SK-N-SH (cell line): ENCODE measurements at regions of chr9 and their contacts with region 1.

Region 1: GRCh38 chr9:114082017-114082762 is 4.1 kb upstream of the AMBP start:
- DNase-seq: peak; percentile 86
- H3K4me3 ChIP-seq: no peak overlapping the region; a peak in 1 of 4 replicates
- H3K27ac ChIP-seq: no peak overlapping the region
- H3K4me1 ChIP-seq: no peaks in the 10 kb centered on the region; a peak in 1 of 4 replicates
- H3K27me3 ChIP-seq: no peaks in the 10 kb centered on the region; the same call in 1 of the 2 replicates
- CTCF ChIP-seq: peak; percentile 89
- EP300 ChIP-seq: no peak
- RAD21 ChIP-seq: peak; percentile 92

Region 2: DNA sequence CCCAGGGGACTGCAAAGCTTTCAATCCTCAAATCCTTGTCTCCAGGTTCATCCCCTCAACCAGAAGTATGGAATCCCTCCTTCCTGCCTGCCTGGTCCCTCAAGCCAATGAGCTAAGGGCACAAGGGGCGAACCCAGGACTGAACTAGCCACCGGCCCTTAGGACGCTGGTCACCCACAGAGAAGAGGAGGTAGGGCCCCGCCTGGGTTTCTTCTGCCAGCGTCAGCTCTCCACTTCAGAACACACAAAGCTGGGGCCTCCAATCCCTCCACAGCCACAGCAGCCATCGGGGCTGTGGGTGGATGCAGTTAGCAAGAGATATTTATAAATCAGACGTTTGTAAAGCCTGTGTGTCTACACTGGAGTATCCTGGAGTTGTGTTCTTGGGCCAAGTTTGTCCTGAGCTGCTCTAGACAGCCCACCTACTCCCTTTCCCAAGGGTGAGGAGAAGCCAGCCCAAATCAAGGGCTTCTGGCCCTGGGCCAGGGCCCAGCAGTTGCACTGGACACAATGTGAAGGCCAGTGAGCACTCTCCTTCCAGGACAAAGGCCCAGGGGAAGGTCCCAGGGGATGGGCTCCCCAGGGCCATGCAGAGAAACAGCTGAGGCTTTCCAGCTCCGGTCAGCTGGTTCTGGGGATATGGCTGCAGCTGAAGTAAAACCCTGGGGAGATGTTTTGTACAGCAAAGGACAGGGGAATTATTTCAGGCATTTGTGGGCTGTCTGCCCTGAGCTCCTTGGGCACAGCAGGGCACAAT is 23.0 kb before region 1 on chr9:
- CTCF ChIA-PET with region 1: interaction called, 14 read pairs
- POLR2A ChIA-PET with region 1: no interaction called
- DNase-seq: no peak
- H3K4me3 ChIP-seq: no peak overlapping the region
- H3K27ac ChIP-seq: no peak overlapping the region
- H3K4me1 ChIP-seq: no peaks in the 10 kb centered on the region; a peak in 1 of 4 replicates
- H3K27me3 ChIP-seq: no peaks in the 10 kb centered on the region
- CTCF ChIP-seq: no peak
- EP300 ChIP-seq: no peak
- RAD21 ChIP-seq: no peak

Region 3: DNA sequence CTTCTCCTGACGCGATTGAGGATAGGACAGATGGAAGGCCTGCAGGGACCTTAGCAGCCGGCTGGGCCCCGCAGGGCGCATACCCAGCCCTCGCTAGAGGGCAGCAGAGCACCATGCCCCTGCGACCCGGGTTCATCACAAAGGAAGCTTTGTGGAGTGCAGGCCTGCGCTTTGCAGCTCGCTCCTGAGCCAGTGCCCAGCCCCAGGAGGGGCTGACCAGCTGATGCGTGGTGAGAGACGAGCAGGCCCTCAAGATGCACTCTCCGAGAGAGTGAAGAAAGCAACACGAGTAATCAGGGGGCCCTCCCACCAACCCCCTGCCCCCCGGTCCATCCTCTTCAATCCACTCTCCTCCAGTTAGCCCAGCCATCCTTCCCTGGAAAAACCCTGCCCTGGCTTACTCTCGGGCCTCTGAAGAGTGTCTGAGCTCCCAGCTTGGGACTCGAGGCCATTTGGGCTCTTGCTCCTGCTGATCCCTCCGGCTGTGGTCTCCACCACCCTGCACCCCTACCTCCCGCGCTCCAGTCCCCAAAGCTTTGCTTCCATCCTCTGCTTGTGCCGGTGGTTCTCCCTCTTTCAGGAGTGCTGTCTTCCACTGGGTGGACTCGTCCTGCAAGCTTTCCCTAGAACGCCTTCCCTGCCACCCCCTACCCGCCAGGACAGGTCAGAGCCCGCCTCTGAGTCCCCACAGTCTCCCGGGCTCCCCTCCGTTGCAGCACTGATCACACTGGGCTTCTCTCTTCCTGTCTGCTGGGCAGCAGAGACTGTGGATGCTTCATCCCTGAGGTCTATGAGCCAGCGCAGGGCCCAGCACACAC is 26.0 kb after region 1 on chr9:
- CTCF ChIA-PET with region 1: interaction called, 59 read pairs
- POLR2A ChIA-PET with region 1: no interaction called
- DNase-seq: peak; percentile 88
- H3K4me3 ChIP-seq: no peak overlapping the region; a peak in 1 of 4 replicates
- H3K27ac ChIP-seq: no peak overlapping the region
- H3K4me1 ChIP-seq: no peaks in the 10 kb centered on the region; a peak in 1 of 4 replicates
- H3K27me3 ChIP-seq: no peaks in the 10 kb centered on the region; the same call in 1 of the 2 replicates
- CTCF ChIP-seq: peak; percentile 82
- EP300 ChIP-seq: no peak
- RAD21 ChIP-seq: peak; percentile 92

Region 4: GRCh38 chr9:114155263-114155972 is 73.2 kb after region 1 on chr9 and contains the start of gene COL27A1:
- CTCF ChIA-PET with region 1: interaction called, 32 read pairs
- POLR2A ChIA-PET with region 1: no interaction called
- DNase-seq: peak; percentile 97
- H3K4me3 ChIP-seq: peak within 1 kb of the TSS; percentile 54 to 88
- H3K27ac ChIP-seq: peak within 1 kb of the TSS in 1 of 2 experiments; percentile 29; a peak in 1 of 4 replicates
- H3K4me1 ChIP-seq: peaks cover 5 to 8% of the 10 kb centered on the region in 2 experiments; a peak in 2 of 4 replicates
- H3K27me3 ChIP-seq: peaks cover 5% of the 10 kb centered on the region; the same call in 1 of the 2 replicates
- CTCF ChIP-seq: peak; percentile 93
- EP300 ChIP-seq: no peak
- RAD21 ChIP-seq: peak; percentile 82
- polyA plus RNA-seq, gene COL27A1: 6.8 and 8.7 TPM in 2 replicates

Region 5: DNA sequence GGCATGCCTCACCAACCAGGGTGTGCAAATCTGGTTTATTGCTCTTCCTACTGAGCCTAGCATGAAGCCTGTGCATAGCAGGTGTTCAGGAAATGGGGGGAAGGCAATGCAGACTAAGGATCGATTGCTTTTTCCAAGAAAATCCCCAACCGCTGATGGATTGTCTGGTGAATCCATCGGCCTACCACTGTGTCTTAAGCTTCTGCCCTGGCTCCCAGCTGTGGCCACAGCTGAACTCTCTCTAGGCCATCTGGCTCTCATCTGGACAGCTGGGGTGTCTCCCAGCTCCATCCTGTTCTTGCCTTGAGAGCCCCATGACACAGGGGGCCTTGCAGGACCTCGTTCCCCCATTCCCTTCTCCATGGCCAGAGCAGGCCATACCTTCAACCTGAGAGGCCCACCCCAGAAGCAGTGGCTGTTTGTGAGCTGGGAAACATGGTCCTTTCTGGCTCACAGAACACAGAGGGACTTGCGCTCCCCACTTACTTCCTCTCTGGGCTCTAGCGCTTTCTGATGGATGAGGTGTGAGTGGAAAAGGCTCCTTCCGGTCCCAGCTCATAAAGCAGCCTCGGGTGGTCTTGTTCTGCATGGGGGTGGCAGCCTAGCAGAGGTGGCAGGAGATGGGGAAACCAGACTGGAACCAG is 114.9 kb after region 1 on chr9:
- CTCF ChIA-PET with region 1: no interaction called
- POLR2A ChIA-PET with region 1: no interaction called
- DNase-seq: no peak
- H3K4me3 ChIP-seq: no peak overlapping the region
- H3K27ac ChIP-seq: no peak overlapping the region
- H3K4me1 ChIP-seq: no peaks in the 10 kb centered on the region; a peak in 1 of 4 replicates
- H3K27me3 ChIP-seq: no peaks in the 10 kb centered on the region
- CTCF ChIP-seq: no peak
- EP300 ChIP-seq: no peak
- RAD21 ChIP-seq: no peak

Region 6: GRCh38 chr9:114263853-114264510 is 181.8 kb after region 1 on chr9:
- CTCF ChIA-PET with region 1: interaction called, 51 read pairs
- POLR2A ChIA-PET with region 1: no interaction called
- DNase-seq: no peak
- H3K4me3 ChIP-seq: no peak overlapping the region
- H3K27ac ChIP-seq: no peak overlapping the region
- H3K4me1 ChIP-seq: peaks cover 0 to 19% of the 10 kb centered on the region in 2 experiments; a peak in 1 of 4 replicates
- H3K27me3 ChIP-seq: no peaks in the 10 kb centered on the region
- CTCF ChIP-seq: no peak
- EP300 ChIP-seq: no peak
- RAD21 ChIP-seq: peak; percentile 28; the same call in 1 of the 2 replicates

Region 7: GRCh38 chr9:114282926-114283325 is 200.7 kb after region 1 on chr9:
- CTCF ChIA-PET with region 1: interaction called, 46 read pairs
- POLR2A ChIA-PET with region 1: no interaction called
- DNase-seq: peak; percentile 76
- H3K4me3 ChIP-seq: no peak overlapping the region
- H3K27ac ChIP-seq: peak overlapping the region; percentile 17 to 49; a peak in 3 of 4 replicates
- H3K4me1 ChIP-seq: peaks cover 18 to 50% of the 10 kb centered on the region in 2 experiments
- H3K27me3 ChIP-seq: no peaks in the 10 kb centered on the region
- CTCF ChIP-seq: no peak
- EP300 ChIP-seq: no peak
- RAD21 ChIP-seq: no peak

Region 8: GRCh38 chr9:114314881-114315722 is 232.9 kb after region 1 on chr9:
- CTCF ChIA-PET with region 1: interaction called, 15 read pairs
- POLR2A ChIA-PET with region 1: no interaction called
- DNase-seq: no peak
- H3K4me3 ChIP-seq: no peak overlapping the region
- H3K27ac ChIP-seq: no peak overlapping the region
- H3K4me1 ChIP-seq: peaks cover 0 to 3% of the 10 kb centered on the region in 2 experiments; a peak in 1 of 4 replicates
- H3K27me3 ChIP-seq: no peaks in the 10 kb centered on the region
- CTCF ChIP-seq: no peak
- EP300 ChIP-seq: no peak
- RAD21 ChIP-seq: no peak

Region 9: DNA sequence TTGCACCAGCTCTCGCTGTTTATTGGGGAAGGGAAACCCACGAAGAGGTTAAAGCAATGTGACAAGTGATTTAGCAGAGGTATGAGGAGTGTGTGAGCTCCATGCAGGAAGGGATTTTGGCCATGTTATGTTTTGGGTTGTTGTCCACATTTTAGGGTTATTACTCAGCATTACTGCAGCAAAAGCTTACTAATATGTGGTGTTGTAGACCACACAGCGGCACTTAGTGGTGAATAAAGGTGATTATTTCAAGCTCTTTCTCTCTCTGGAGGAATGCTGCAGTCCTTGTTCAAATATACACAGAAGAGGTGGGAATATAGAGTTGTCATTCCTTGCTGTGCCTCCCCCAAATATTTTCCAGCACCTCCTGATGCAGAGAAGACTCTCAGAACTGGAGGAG is 335.3 kb after region 1 on chr9:
- CTCF ChIA-PET with region 1: no interaction called
- POLR2A ChIA-PET with region 1: no interaction called
- DNase-seq: no peak
- H3K4me3 ChIP-seq: no peak overlapping the region
- H3K27ac ChIP-seq: no peak overlapping the region
- H3K4me1 ChIP-seq: no peaks in the 10 kb centered on the region
- H3K27me3 ChIP-seq: no peaks in the 10 kb centered on the region
- CTCF ChIP-seq: no peak
- EP300 ChIP-seq: no peak
- RAD21 ChIP-seq: no peak